ENCODE measurements at regions of chr3 and their contacts with region 1.

Region 1: DNA sequence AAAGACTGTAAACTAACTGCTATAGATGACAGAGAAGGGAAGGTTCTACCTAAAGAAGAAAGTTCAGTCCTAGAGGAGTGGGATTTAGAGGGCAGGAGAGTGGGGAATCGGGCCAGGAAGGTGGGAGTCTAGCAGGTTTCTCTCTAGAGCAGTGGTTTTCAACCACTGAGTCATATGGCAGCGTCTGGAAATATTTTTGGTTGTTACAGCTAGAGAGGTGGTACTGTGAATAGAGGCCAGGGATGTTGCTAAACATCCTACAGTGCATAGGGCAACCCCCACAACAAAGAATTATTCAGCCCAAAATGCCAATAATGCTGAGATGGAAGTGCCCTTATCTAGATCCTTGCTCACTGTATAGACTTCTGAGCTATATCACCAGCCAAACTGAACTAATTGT is 28.7 kb downstream of the ATP1B3 start:
- DNase-seq: no peak
- H3K4me3 Mint-ChIP-seq: peak overlapping the region; percentile 4
- H3K27ac Mint-ChIP-seq: peak overlapping the region; percentile 52
- H3K4me1 Mint-ChIP-seq: peaks cover 33% of the 10 kb centered on the region
- H3K27me3 Mint-ChIP-seq: no peaks in the 10 kb centered on the region

Region 2: GRCh38 chr3:141722081-141722480 is 183.0 kb before region 1 on chr3:
- CTCF ChIA-PET with region 1: no interaction called
- POLR2A ChIA-PET with region 1: no interaction called
- intact Hi-C with region 1: no loop called
- DNase-seq: no peak
- H3K4me3 Mint-ChIP-seq: no peak overlapping the region
- H3K27ac Mint-ChIP-seq: no peak overlapping the region
- H3K4me1 Mint-ChIP-seq: no peaks in the 10 kb centered on the region
- H3K27me3 Mint-ChIP-seq: no peaks in the 10 kb centered on the region

Region 3: GRCh38 chr3:141796081-141796888 is 108.8 kb before region 1 on chr3:
- CTCF ChIA-PET with region 1: no interaction called
- POLR2A ChIA-PET with region 1: interaction called, 3 read pairs
- intact Hi-C with region 1: loop called (anchors 5 kb)
- DNase-seq: peak; percentile 88
- H3K4me3 Mint-ChIP-seq: peak overlapping the region; percentile 84
- H3K27ac Mint-ChIP-seq: peak overlapping the region; percentile 94
- H3K4me1 Mint-ChIP-seq: peaks cover 48% of the 10 kb centered on the region
- H3K27me3 Mint-ChIP-seq: no peaks in the 10 kb centered on the region

Region 4: DNA sequence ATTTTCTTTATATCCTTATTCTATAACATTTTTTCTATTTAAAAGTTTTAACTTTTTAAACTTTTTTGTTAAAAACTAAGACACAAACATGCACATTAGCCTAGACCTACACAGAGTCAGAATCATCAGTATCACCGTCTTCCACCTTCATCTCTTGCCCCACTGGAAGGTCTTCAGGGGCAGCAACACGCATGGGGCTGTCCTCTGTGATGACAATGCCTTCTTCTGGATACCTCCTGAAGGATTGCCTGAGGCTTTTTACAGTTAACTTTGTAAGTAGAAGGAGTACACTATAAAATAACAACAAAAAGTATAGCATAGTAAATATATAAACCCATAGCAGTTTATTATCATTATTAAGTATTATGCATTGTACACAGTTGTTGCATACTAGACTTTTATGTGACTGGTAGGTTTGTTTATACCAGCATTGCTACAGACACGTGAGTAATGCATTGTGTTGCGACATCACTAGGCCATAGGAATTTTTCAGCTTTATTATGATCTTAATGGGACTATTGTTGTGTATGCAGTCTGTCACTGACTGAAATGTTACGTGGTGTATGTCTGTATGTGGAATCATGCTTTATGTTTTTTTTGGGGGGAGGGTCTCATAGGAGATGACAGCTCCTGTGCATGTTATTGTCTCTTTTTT is 10.5 kb before region 1 on chr3:
- CTCF ChIA-PET with region 1: interaction called, 4 read pairs
- POLR2A ChIA-PET with region 1: no interaction called
- intact Hi-C with region 1: loop called (anchors 2 kb)
- DNase-seq: no peak
- H3K4me3 Mint-ChIP-seq: no peak overlapping the region
- H3K27ac Mint-ChIP-seq: no peak overlapping the region
- H3K4me1 Mint-ChIP-seq: peaks cover 44% of the 10 kb centered on the region
- H3K27me3 Mint-ChIP-seq: no peaks in the 10 kb centered on the region

Region 5: GRCh38 chr3:141940204-141940776 is 35.2 kb after region 1 on chr3:
- CTCF ChIA-PET with region 1: no interaction called
- POLR2A ChIA-PET with region 1: no interaction called
- intact Hi-C with region 1: loop called (anchors 1 kb)
- DNase-seq: peak; percentile 81
- H3K4me3 Mint-ChIP-seq: no peak overlapping the region
- H3K27ac Mint-ChIP-seq: peak overlapping the region; percentile 65
- H3K4me1 Mint-ChIP-seq: peaks cover 22% of the 10 kb centered on the region
- H3K27me3 Mint-ChIP-seq: no peaks in the 10 kb centered on the region

Measured in activated CD4-positive, alpha-beta memory T cell treated with anti-CD3 and anti-CD28 coated beads for 36 hours (primary cell).